ENCODE measurements at regions of chr12 and their contacts with region 1.

Region 1: DNA sequence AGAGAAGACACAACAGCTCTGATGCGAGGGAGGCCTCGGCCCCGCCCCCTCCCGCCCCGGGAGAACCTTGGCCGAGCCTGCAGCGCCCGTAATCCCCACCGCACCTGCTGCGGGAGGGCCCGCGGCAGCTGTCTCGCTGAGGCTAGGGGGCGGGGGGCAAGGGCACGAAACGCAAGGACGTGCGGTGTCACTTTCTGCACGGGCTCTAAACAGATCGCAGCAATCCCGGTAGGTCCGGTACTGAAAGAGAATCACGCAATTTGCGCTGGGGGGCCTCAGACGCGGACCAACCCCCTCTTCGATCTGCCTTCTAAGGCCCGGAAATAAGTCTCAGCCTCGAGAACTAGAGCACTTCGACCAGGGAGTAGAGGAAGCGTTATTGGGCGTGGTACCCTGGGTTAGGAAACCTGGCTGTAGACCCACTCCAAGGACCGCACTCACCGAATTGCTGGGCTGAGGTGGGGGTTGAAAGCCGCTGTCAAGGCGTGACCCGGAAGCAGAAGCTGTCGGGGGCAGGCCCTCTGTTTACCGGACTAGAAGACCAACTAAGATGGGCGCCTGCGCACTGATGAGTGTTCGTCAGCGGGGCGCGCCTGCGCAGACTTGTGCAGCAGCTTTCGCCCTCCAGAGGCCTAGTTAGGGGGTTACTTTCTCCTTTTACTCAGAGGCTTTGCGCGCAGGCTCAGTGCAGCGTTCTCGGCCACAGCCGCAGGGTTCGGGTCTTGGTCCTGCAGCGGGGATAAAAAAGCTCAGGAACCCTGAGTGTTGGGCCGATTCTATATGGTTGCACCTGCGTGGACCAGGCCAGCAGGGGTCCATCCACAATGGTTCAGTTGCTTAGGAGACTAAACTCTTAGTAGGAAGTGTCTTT is at the start of gene ASB8:
- DNase-seq: peak; percentile 95 to 99 (median 98)
- ATAC-seq: peak; percentile 98
- H3K4me3 ChIP-seq: peak within 1 kb of the TSS; percentile 97
- H3K4me3 Mint-ChIP-seq: peak within 1 kb of the TSS; percentile 90 to 99 (median 97)
- H3K27ac ChIP-seq: peak within 1 kb of the TSS; percentile 84
- H3K27ac Mint-ChIP-seq: peak within 1 kb of the TSS; percentile 95 to 99 (median 99)
- H3K4me1 ChIP-seq: peaks cover 8 to 20% of the 10 kb centered on the region in 2 donors
- H3K4me1 Mint-ChIP-seq: peaks cover 22 to 65% (median 56%) of the 10 kb centered on the region in 7 donors
- H3K27me3 ChIP-seq: no peaks in the 10 kb centered on the region
- H3K27me3 Mint-ChIP-seq: peaks cover 0 to 5% (median 0%) of the 10 kb centered on the region in 5 donors
- total RNA-seq, gene ASB8: 42.9 to 75.9 (median 54.9) TPM

Region 2: GRCh38 chr12:48119078-48119833 is 38.0 kb before region 1 on chr12 and contains the start of gene PFKM:
- CTCF ChIA-PET with region 1: no interaction called
- POLR2A ChIA-PET with region 1: interaction called, 4 read pairs
- intact Hi-C with region 1: loop called (anchors 1 kb)
- DNase-seq: peak; percentile 16 to 71 (median 63)
- ATAC-seq: peak; percentile 99
- H3K4me3 ChIP-seq: peak within 1 kb of the TSS; percentile 85
- H3K4me3 Mint-ChIP-seq: peak within 1 kb of the TSS; percentile 91 to 100 (median 98)
- H3K27ac ChIP-seq: peak within 1 kb of the TSS; percentile 60
- H3K27ac Mint-ChIP-seq: peak within 1 kb of the TSS; percentile 60 to 97 (median 84)
- H3K4me1 ChIP-seq: peaks cover 0 to 3% of the 10 kb centered on the region in 2 donors
- H3K4me1 Mint-ChIP-seq: peaks cover 13 to 25% (median 24%) of the 10 kb centered on the region in 7 donors
- H3K27me3 ChIP-seq: no peaks in the 10 kb centered on the region
- H3K27me3 Mint-ChIP-seq: peaks cover 0 to 29% (median 9%) of the 10 kb centered on the region in 5 donors
- total RNA-seq, gene PFKM: 11.7 to 20.3 (median 14.5) TPM

Region 3: GRCh38 chr12:48183091-48183875 is 26.0 kb after region 1 on chr12 and contains the start of gene CCDC184:
- CTCF ChIA-PET with region 1: no interaction called
- POLR2A ChIA-PET with region 1: interaction called, 6 read pairs
- intact Hi-C with region 1: loop called (anchors 1 kb)
- DNase-seq: peak; percentile 58 to 85 (median 83)
- ATAC-seq: peak; percentile 84
- H3K4me3 ChIP-seq: peak within 1 kb of the TSS; percentile 80
- H3K4me3 Mint-ChIP-seq: peak within 1 kb of the TSS; percentile 91 to 98 (median 96)
- H3K27ac ChIP-seq: peak within 1 kb of the TSS; percentile 59
- H3K27ac Mint-ChIP-seq: peak within 1 kb of the TSS; percentile 60 to 95 (median 86)
- H3K4me1 ChIP-seq: peaks cover 6 to 11% of the 10 kb centered on the region in 2 donors
- H3K4me1 Mint-ChIP-seq: peaks cover 5 to 28% (median 8%) of the 10 kb centered on the region in 7 donors
- H3K27me3 ChIP-seq: peaks cover 0 to 4% of the 10 kb centered on the region in 2 donors
- H3K27me3 Mint-ChIP-seq: peaks cover 21 to 81% (median 38%) of the 10 kb centered on the region in 5 donors
- total RNA-seq, gene CCDC184: 0.22 to 3.8 (median 1.8) TPM in 4 of 5 experiments, not detected in the other

Region 4: GRCh38 chr12:48716493-48717251 is 559.4 kb after region 1 on chr12 and contains the start of gene CCNT1:
- CTCF ChIA-PET with region 1: no interaction called
- POLR2A ChIA-PET with region 1: no interaction called
- intact Hi-C with region 1: loop called (anchors 1 to 5 kb)
- DNase-seq: peak; percentile 90 to 100 (median 99)
- ATAC-seq: peak; percentile 93
- H3K4me3 ChIP-seq: peak within 1 kb of the TSS; percentile 88
- H3K4me3 Mint-ChIP-seq: peak within 1 kb of the TSS; percentile 89 to 98 (median 94)
- H3K27ac ChIP-seq: peak within 1 kb of the TSS; percentile 95
- H3K27ac Mint-ChIP-seq: peak within 1 kb of the TSS; percentile 95 to 99 (median 98)
- H3K4me1 ChIP-seq: peaks cover 14 to 24% of the 10 kb centered on the region in 2 donors
- H3K4me1 Mint-ChIP-seq: peaks cover 21 to 50% (median 37%) of the 10 kb centered on the region in 7 donors
- H3K27me3 ChIP-seq: no peaks in the 10 kb centered on the region
- H3K27me3 Mint-ChIP-seq: peaks cover 0 to 4% (median 0%) of the 10 kb centered on the region in 5 donors
- total RNA-seq, gene CCNT1: 62.5 to 127 (median 76.6) TPM

Measured in naive thymus-derived CD4-positive, alpha-beta T cell (primary cell).